ENCODE measurements at regions of chr14 and their contacts with region 1.

Region 1: GRCh38 chr14:28773861-28774691 is 7.5 kb downstream of the FOXG1 start:
- H3K4me3 ChIP-seq: peak overlapping the region; percentile 36
- H3K27ac ChIP-seq: no peak overlapping the region
- H3K4me1 ChIP-seq: peaks cover 16% of the 10 kb centered on the region
- CTCF ChIP-seq: peak; percentile 77

Region 2: GRCh38 chr14:28626780-28627179 is 147.3 kb before region 1 on chr14:
- CTCF ChIA-PET with region 1: no interaction called
- POLR2A ChIA-PET with region 1: no interaction called
- H3K4me3 ChIP-seq: no peak overlapping the region
- H3K27ac ChIP-seq: no peak overlapping the region
- H3K4me1 ChIP-seq: no peaks in the 10 kb centered on the region
- CTCF ChIP-seq: no peak

Region 3: GRCh38 chr14:28813810-28814209 is 39.7 kb after region 1 on chr14:
- CTCF ChIA-PET with region 1: no interaction called
- POLR2A ChIA-PET with region 1: no interaction called
- H3K4me3 ChIP-seq: no peak overlapping the region
- H3K27ac ChIP-seq: no peak overlapping the region
- H3K4me1 ChIP-seq: no peaks in the 10 kb centered on the region
- CTCF ChIP-seq: no peak

Region 4: GRCh38 chr14:29536886-29537511 is 762.9 kb after region 1 on chr14:
- CTCF ChIA-PET with region 1: interaction called, 10 read pairs
- POLR2A ChIA-PET with region 1: no interaction called
- H3K4me3 ChIP-seq: no peak overlapping the region
- H3K27ac ChIP-seq: no peak overlapping the region
- H3K4me1 ChIP-seq: no peaks in the 10 kb centered on the region
- CTCF ChIP-seq: no peak